Transverse colon (tissue), 4 donors: ENCODE measurements at regions of chr7 and their contacts with region 1.

Region 1: GRCh38 chr7:100444311-100445278 is 8.3 kb upstream of the PPP1R35 start:
- DNase-seq: peak; percentile 44
- H3K4me3 ChIP-seq: no peak overlapping the region
- H3K27ac ChIP-seq: peak overlapping the region; percentile 5 to 46 (median 32)
- H3K4me1 ChIP-seq: peaks cover 0 to 16% (median 1%) of the 10 kb centered on the region in 4 donors
- H3K27me3 ChIP-seq: no peaks in the 10 kb centered on the region
- CTCF ChIP-seq: no peak
- EP300 ChIP-seq: no peak
- POLR2A ChIP-seq: no peak

Region 2: DNA sequence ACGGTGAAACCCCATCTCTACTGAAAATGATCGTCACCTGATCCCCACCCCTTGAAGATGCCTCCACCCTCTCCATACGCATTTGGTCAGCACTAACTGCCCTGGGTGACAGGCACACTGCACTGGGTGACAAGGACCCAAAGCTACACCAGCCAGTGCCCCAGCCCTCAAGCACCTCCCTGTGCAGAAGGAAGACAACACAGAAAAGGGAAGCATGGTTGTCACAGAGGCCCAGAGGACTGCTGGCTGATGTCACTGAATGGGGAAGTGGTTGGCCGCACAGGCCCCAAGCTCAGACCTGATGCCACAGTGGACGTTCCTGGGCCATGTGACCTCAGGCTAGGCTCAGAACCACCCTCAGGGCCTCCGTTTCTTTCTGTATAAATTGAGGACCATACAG is 75.5 kb before region 1 on chr7:
- in situ Hi-C with region 1: no loop called
- intact Hi-C with region 1: no loop called
- DNase-seq: peak; percentile 75
- H3K4me3 ChIP-seq: no peak overlapping the region
- H3K27ac ChIP-seq: peak overlapping the region; percentile 50 to 71 (median 60)
- H3K4me1 ChIP-seq: peaks cover 0 to 9% (median 0%) of the 10 kb centered on the region in 4 donors
- H3K27me3 ChIP-seq: no peaks in the 10 kb centered on the region
- CTCF ChIP-seq: no peak
- EP300 ChIP-seq: no peak
- POLR2A ChIP-seq: no peak

Region 3: GRCh38 chr7:102253973-102254370 is 1809.4 kb after region 1 on chr7:
- in situ Hi-C with region 1: no loop called
- intact Hi-C with region 1: loop called (anchors 5 kb)
- DNase-seq: no peak
- H3K4me3 ChIP-seq: no peak overlapping the region
- H3K27ac ChIP-seq: no peak overlapping the region
- H3K4me1 ChIP-seq: no peaks in the 10 kb centered on the region
- H3K27me3 ChIP-seq: no peaks in the 10 kb centered on the region
- CTCF ChIP-seq: no peak
- EP300 ChIP-seq: no peak
- POLR2A ChIP-seq: no peak